HepG2 (cell line): ENCODE measurements at regions of chr19 and their contacts with region 1.

Region 1: DNA sequence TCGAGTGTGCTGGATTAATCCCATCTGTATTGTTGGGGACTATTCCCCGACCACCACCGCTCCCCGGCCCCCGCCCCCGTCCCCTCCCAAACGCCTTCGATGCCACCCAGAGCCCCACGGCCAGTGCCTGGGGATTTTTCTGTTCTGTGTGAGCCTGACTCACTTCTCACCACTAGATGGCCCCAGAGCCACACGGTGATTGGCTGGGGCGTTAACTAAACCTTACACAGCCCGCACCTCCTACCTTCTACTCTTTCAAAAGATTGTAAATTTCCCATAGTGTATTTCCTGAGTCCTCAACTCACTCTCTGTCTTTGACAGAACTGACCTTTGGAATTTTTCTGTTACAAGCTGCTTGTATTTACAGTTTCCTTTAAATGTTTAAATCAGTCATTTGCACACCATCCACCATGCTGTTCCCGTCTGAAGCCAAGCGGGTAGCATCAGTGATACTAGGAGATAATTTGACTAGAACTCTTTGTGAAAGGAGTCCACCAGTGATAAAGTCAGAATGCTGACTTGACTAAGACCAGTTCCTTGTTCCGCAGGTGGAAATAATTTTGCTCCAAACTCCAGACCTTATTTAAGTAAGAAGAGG is 61.4 kb downstream of the RFX2 start:
- DNase-seq: peak; percentile 69
- ATAC-seq: peak; percentile 96
- H3K4me3 ChIP-seq: no peak overlapping the region
- H3K27ac ChIP-seq: no peak overlapping the region
- H3K4me1 ChIP-seq: peaks cover 13% of the 10 kb centered on the region
- H3K27me3 ChIP-seq: no peaks in the 10 kb centered on the region
- CTCF ChIP-seq: peak; percentile 87
- EP300 ChIP-seq: no peak
- POLR2A ChIP-seq: no peak
- RAD21 ChIP-seq: peak; percentile 84

Region 2: GRCh38 chr19:5987077-5987818 is 61.7 kb before region 1 on chr19:
- CTCF ChIA-PET with region 1: interaction called, 30 read pairs
- POLR2A ChIA-PET with region 1: no interaction called
- in situ Hi-C with region 1: no loop called
- intact Hi-C with region 1: no loop called
- DNase-seq: peak; percentile 90
- ATAC-seq: peak; percentile 54
- H3K4me3 ChIP-seq: peak overlapping the region; percentile 20 to 65 (median 47); a peak in 5 of 6 replicates
- H3K27ac ChIP-seq: no peak overlapping the region
- H3K4me1 ChIP-seq: peaks cover 71% of the 10 kb centered on the region
- H3K27me3 ChIP-seq: peaks cover 0 to 11% of the 10 kb centered on the region in 2 experiments; a peak in 2 of 5 replicates
- CTCF ChIP-seq: peak; percentile 92
- EP300 ChIP-seq: peak in 1 of 2 experiments; percentile 63; a peak in 2 of 4 replicates
- POLR2A ChIP-seq: no peak
- RAD21 ChIP-seq: peak; percentile 81

Region 3: DNA sequence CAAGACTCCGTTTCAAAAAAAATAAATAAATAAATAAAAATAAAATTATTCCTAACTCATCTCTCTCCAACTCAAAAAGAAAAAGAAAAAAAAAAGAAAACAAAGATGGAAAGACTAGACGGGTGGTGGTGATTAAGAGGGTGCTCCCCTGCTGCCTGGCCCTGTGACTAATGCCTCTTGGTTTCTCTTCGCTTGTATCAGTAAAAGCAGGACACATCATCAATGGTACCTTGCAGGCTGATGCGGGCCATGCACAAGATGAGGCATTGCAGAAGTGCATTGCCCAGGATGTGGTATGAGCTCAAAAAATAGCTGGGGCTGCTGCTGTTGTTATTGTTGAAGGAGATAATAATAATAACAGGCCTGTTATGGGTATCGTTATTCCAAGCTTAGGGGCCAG is 269.9 kb after region 1 on chr19:
- CTCF ChIA-PET with region 1: no interaction called
- POLR2A ChIA-PET with region 1: no interaction called
- in situ Hi-C with region 1: loop called (anchors 25 kb)
- intact Hi-C with region 1: no loop called
- DNase-seq: no peak
- ATAC-seq: no peak
- H3K4me3 ChIP-seq: no peak overlapping the region
- H3K27ac ChIP-seq: no peak overlapping the region
- H3K4me1 ChIP-seq: no peaks in the 10 kb centered on the region
- H3K27me3 ChIP-seq: peaks cover 1 to 3% of the 10 kb centered on the region in 2 experiments; a peak in 3 of 5 replicates
- CTCF ChIP-seq: no peak
- EP300 ChIP-seq: no peak
- POLR2A ChIP-seq: no peak
- RAD21 ChIP-seq: no peak